Esophagus muscularis mucosa (tissue), 4 donors: ENCODE measurements at regions of chr12 and their contacts with region 1.

Region 1: GRCh38 chr12:114355389-114356088 is 50.4 kb downstream of the TBX5 start:
- DNase-seq: no peak
- H3K4me3 ChIP-seq: no peak overlapping the region
- H3K27ac ChIP-seq: no peak overlapping the region
- H3K4me1 ChIP-seq: peaks cover 0 to 7% (median 0%) of the 10 kb centered on the region in 4 donors
- H3K27me3 ChIP-seq: no peaks in the 10 kb centered on the region
- CTCF ChIP-seq: peak; percentile 25 to 55 (median 35)
- EP300 ChIP-seq: no peak
- POLR2A ChIP-seq: no peak

Region 2: DNA sequence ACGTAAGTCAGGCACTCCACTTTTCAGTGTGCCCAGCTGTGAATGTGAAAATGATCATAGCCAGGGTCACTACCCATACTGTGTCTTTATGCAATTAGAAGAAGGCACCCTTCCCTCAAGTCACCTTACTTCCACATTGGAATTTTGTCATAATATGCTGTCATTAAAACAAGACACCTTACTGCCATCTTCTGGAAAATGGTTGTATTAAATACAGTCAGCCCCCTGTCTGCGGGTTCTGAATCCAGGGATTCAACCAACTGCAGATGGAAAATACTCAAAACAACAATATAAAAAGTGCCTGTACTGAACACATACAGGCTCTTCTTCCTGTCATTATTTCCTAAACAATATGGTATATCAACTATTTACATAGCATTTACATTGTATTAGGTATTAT is 120.6 kb after region 1 on chr12:
- intact Hi-C with region 1: loop called (anchors 10 kb)
- DNase-seq: no peak
- H3K4me3 ChIP-seq: no peak overlapping the region
- H3K27ac ChIP-seq: no peak overlapping the region
- H3K4me1 ChIP-seq: peaks cover 13 to 18% (median 16%) of the 10 kb centered on the region in 4 donors
- H3K27me3 ChIP-seq: peaks cover 0 to 52% (median 12%) of the 10 kb centered on the region in 4 donors
- CTCF ChIP-seq: peak; percentile 62 to 77 (median 71)
- EP300 ChIP-seq: no peak
- POLR2A ChIP-seq: no peak